CD14-positive monocyte (primary cell): ENCODE measurements at regions of chr9 and their contacts with region 1.

Region 1: GRCh38 chr9:69027355-69028096 is 8.0 kb upstream of the FXN start:
- DNase-seq: peak; percentile 37 to 62 (median 60)
- H3K4me3 ChIP-seq: no peak overlapping the region
- H3K4me3 Mint-ChIP-seq: no peak overlapping the region
- H3K27ac ChIP-seq: no peak overlapping the region
- H3K27ac Mint-ChIP-seq: no peak overlapping the region
- H3K4me1 ChIP-seq: no peaks in the 10 kb centered on the region
- H3K4me1 Mint-ChIP-seq: peaks cover 14% of the 10 kb centered on the region
- H3K27me3 ChIP-seq: no peaks in the 10 kb centered on the region
- H3K27me3 Mint-ChIP-seq: peaks cover 0 to 5% (median 3%) of the 10 kb centered on the region in 3 donors
- CTCF ChIP-seq: peak; percentile 88

Region 2: GRCh38 chr9:68584189-68585033 is 443.1 kb before region 1 on chr9:
- intact Hi-C with region 1: loop called in 1 of 2 experiments (anchors 10 kb)
- DNase-seq: peak; percentile 79 to 88 (median 87)
- H3K4me3 ChIP-seq: no peak overlapping the region
- H3K4me3 Mint-ChIP-seq: no peak overlapping the region
- H3K27ac ChIP-seq: no peak overlapping the region
- H3K27ac Mint-ChIP-seq: no peak overlapping the region
- H3K4me1 ChIP-seq: peaks cover 5 to 8% of the 10 kb centered on the region in 2 donors
- H3K4me1 Mint-ChIP-seq: peaks cover 6% of the 10 kb centered on the region
- H3K27me3 ChIP-seq: no peaks in the 10 kb centered on the region
- H3K27me3 Mint-ChIP-seq: peaks cover 0 to 4% (median 2%) of the 10 kb centered on the region in 3 donors
- CTCF ChIP-seq: peak; percentile 98

Region 3: DNA sequence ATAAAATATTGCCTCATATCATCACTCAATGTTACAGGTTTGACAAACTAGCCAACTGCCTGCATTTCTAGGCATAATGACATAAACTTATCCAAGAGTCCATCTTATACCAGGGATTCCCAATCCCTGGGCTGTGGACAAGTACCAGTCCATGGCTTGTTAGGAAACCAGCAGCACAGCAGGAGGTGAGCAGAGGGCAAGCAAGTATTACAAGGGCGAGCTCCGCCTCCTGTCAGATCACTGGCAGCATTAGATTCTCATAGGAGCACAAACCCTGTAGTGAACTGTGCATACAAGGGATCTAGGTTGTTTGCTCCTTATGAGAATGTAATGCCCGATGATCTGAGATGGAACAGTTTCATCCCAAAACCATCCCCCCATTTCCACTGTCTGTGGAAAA is 158.5 kb before region 1 on chr9:
- intact Hi-C with region 1: no loop called
- DNase-seq: no peak
- H3K4me3 ChIP-seq: no peak overlapping the region
- H3K4me3 Mint-ChIP-seq: no peak overlapping the region
- H3K27ac ChIP-seq: no peak overlapping the region
- H3K27ac Mint-ChIP-seq: no peak overlapping the region
- H3K4me1 ChIP-seq: no peaks in the 10 kb centered on the region
- H3K4me1 Mint-ChIP-seq: peaks cover 8% of the 10 kb centered on the region
- H3K27me3 ChIP-seq: no peaks in the 10 kb centered on the region
- H3K27me3 Mint-ChIP-seq: no peaks in the 10 kb centered on the region
- CTCF ChIP-seq: no peak

Region 4: DNA sequence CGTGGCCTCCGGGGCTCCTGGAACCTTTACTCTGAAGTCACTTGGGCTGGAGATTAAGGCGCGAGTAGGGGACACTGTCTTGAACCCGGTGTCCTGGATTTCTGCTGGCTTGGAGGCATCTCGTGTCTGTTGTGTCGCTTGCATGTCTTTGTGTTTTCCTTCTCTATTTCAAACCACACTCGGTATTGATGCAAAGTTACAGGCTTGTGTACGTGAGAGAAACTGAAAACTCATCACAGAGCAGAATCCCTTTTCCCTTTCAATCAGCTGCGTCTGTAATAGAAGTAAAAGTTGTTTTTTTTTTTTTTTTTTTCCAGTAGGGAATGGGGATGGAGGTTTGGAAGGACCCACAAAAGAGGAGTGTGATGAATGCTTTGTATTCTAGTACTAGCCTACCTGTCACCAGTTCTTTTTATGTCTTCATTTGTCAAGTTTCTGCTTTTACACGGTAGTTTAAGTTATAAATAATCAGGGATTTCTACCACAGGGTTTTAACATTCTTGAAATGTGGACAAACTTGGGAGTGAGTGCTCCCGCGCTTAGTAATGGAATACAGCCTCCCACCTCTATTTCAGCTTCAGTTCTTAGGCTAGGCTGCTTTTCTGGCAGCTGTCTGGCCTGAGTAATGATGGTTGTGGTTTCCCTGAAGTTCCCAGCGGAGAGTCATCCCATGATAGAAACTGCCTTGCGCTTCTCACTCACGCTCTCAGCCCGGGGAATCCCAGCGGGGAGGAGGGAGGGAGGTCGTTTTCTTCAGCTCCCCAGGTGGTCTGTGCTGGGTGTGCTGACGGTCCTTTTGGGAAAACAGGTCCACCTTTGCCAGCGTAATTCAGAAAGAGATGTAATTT is 147.3 kb after region 1 on chr9:
- intact Hi-C with region 1: no loop called
- DNase-seq: peak; percentile 77 to 96 (median 79)
- H3K4me3 ChIP-seq: peak overlapping the region; percentile 73 to 82 (median 73)
- H3K4me3 Mint-ChIP-seq: peak overlapping the region; percentile 95 to 97
- H3K27ac ChIP-seq: peak overlapping the region; percentile 53 to 84
- H3K27ac Mint-ChIP-seq: peak overlapping the region; percentile 59 to 93 (median 85)
- H3K4me1 ChIP-seq: peaks cover 40 to 52% of the 10 kb centered on the region in 2 donors
- H3K4me1 Mint-ChIP-seq: peaks cover 57% of the 10 kb centered on the region
- H3K27me3 ChIP-seq: no peaks in the 10 kb centered on the region
- H3K27me3 Mint-ChIP-seq: peaks cover 4 to 16% (median 15%) of the 10 kb centered on the region in 3 donors
- CTCF ChIP-seq: no peak